Mammary epithelial cell (primary cell): ENCODE measurements at regions of chr1 and their contacts with region 1.

Region 1: GRCh38 chr1:92298573-92299476 is at the starts of genes GLMN and RPAP2:
- DNase-seq: peak; percentile 86
- H3K4me3 ChIP-seq: peak within 1 kb of the TSS; percentile 66 to 99 (median 80)
- H3K27ac ChIP-seq: peak within 1 kb of the TSS; percentile 90
- H3K4me1 ChIP-seq: peaks cover 3% of the 10 kb centered on the region
- H3K27me3 ChIP-seq: no peaks in the 10 kb centered on the region
- CTCF ChIP-seq: peak in 1 of 2 donors; percentile 26
- total RNA-seq, gene GLMN: 9.3 to 11.9 TPM
- total RNA-seq, gene RPAP2: 10.7 to 30.2 TPM

Region 2: GRCh38 chr1:91500756-91501522 is 797.9 kb before region 1 on chr1 and contains the start of gene CDC7:
- CTCF ChIA-PET with region 1: no interaction called
- dilution Hi-C with region 1: no loop called
- in situ Hi-C with region 1: loop called in 1 of 2 experiments (anchors 25 kb)
- intact Hi-C with region 1: no loop called
- DNase-seq: peak; percentile 82
- H3K4me3 ChIP-seq: peak within 1 kb of the TSS; percentile 59 to 76 (median 67)
- H3K27ac ChIP-seq: peak within 1 kb of the TSS; percentile 85
- H3K4me1 ChIP-seq: peaks cover 3% of the 10 kb centered on the region
- H3K27me3 ChIP-seq: no peaks in the 10 kb centered on the region
- CTCF ChIP-seq: peak in 1 of 2 donors; percentile 47
- total RNA-seq, gene CDC7: 2.8 to 7.6 TPM

Region 3: DNA sequence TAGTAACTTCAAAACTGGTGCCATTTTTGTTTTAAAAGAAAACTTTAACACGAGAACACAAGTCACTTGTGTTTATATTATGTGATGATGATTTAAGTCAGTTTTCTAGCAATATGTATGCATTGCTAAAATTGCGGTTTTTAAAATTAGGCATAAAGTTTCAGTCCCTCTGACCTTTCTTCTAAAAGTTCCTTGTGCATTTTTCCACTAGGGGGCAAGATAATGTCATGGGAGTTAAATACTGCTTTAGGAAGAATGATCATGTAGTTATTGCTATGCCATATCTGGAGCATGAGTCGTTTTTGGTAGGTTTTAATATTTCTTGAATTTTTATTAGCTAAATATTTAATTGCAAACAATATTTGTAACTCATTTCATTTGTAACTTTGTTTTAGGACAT is 787.4 kb before region 1 on chr1:
- CTCF ChIA-PET with region 1: no interaction called
- dilution Hi-C with region 1: no loop called
- in situ Hi-C with region 1: loop called (anchors 10 to 25 kb)
- intact Hi-C with region 1: loop called (anchors 5 kb)
- DNase-seq: peak; percentile 10
- H3K4me3 ChIP-seq: no peak overlapping the region
- H3K27ac ChIP-seq: no peak overlapping the region
- H3K4me1 ChIP-seq: no peaks in the 10 kb centered on the region
- H3K27me3 ChIP-seq: no peaks in the 10 kb centered on the region
- CTCF ChIP-seq: peak; percentile 49 to 60

Region 4: DNA sequence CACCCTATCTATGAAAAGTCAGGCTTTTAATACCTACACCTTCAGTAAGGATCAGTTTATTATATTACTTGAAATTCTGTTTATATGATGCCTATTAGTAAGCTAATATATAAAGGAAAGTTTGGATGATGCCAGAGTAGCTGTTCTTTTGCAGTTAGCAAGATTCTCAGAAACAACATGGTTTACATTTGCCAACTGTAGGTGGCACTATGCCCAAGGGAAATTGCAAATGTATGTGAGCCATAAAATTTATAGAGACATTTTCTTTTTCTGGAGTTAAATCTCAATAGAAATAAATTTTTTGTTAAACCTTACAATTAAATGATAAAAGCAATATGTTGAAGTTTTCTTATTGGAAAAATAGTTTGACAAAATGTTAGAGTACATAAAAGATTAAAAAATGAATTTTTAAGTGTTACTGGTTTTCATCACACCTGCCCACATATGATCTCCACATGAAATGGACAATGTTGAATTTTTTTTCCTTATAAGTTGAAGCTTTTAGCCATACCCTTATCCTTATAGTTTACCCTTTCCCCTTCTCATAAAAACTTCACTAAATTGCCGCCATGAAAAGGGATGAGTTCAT is 301.1 kb before region 1 on chr1:
- CTCF ChIA-PET with region 1: no interaction called
- dilution Hi-C with region 1: no loop called
- in situ Hi-C with region 1: loop called (anchors 10 kb)
- intact Hi-C with region 1: loop called (anchors 2 kb)
- DNase-seq: peak; percentile 40
- H3K4me3 ChIP-seq: no peak overlapping the region
- H3K27ac ChIP-seq: no peak overlapping the region
- H3K4me1 ChIP-seq: no peaks in the 10 kb centered on the region
- H3K27me3 ChIP-seq: no peaks in the 10 kb centered on the region
- CTCF ChIP-seq: peak; percentile 51 to 70

Region 5: DNA sequence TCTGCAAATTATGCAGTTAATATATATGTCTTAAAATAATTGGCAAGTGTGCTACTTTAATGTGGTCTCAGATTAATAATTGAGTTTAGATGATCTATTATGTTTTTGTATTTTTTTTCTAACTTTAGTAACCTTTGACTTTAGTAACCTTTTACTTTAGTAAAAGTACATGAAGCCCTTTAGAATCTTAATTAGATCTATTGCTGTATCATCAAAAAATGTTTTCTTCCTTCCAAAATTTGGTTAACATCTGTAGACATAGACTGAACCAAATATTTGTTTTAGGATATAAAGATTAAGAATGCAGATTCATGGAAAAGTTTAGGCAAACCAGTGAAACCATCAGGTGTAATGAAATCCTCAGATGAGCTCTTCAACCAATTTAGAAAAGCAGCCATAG is 294.7 kb before region 1 on chr1:
- CTCF ChIA-PET with region 1: no interaction called
- dilution Hi-C with region 1: no loop called
- in situ Hi-C with region 1: loop called (anchors 10 kb)
- intact Hi-C with region 1: no loop called
- DNase-seq: no peak
- H3K4me3 ChIP-seq: no peak overlapping the region
- H3K27ac ChIP-seq: no peak overlapping the region
- H3K4me1 ChIP-seq: no peaks in the 10 kb centered on the region
- H3K27me3 ChIP-seq: no peaks in the 10 kb centered on the region
- CTCF ChIP-seq: no peak

Region 6: GRCh38 chr1:92599184-92599583 is 300.4 kb after region 1 on chr1:
- CTCF ChIA-PET with region 1: no interaction called
- dilution Hi-C with region 1: no loop called
- in situ Hi-C with region 1: loop called in 1 of 2 experiments (anchors 25 kb)
- intact Hi-C with region 1: loop called (anchors 5 kb)
- DNase-seq: no peak
- H3K4me3 ChIP-seq: no peak overlapping the region
- H3K27ac ChIP-seq: no peak overlapping the region
- H3K4me1 ChIP-seq: no peaks in the 10 kb centered on the region
- H3K27me3 ChIP-seq: no peaks in the 10 kb centered on the region
- CTCF ChIP-seq: peak; percentile 18 to 45